ENCODE measurements at regions of chr17 and their contacts with region 1.

Region 1: DNA sequence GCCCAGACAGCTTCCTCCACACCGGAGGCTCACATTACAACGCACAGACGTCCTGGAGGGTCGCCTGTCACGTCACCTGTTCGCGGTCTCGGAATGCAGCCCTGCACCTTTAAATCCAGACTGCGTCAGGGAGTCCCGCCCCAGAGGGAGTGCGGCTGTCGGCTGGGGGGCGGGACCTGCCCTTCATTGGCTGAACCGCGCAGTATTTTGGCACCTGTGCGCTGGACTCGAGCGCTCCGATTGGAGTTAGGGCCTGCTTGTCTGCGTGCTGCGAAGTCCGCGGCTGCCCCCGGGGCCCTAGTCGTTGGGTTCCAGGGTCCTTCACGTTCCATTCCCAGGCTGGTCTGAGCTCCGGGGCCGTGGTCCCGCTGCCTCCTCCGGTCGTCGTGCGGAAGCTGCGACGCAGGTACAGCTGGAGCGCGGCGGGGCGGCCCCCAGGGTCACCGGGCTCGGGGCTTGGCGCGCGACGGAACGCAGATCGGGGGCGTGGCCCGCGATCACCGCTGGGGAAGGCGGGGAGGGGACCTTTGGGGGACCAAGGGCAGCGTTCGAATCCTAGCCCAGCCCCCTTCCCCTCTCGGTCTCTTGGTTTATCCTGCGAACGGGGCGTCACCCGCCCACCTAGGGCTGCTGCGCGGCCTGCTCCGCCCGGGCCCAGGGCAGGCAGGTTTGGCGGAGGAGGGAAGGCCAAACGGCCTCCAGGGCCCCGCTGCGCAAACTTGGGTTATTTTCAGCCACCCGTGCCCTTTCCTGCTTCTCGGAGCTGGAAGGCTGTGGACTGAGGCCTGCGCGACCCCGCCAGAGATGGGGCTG is at the start of gene MIEF2:
- DNase-seq: peak; percentile 96 to 100
- ATAC-seq: peak; percentile 72 to 88
- H3K4me3 ChIP-seq: peak within 1 kb of the TSS; percentile 76
- H3K27ac ChIP-seq: peak within 1 kb of the TSS; percentile 84 to 91
- H3K4me1 ChIP-seq: peaks cover 31% of the 10 kb centered on the region
- CTCF ChIP-seq: no peak
- EP300 ChIP-seq: no peak
- POLR2A ChIP-seq: peak; percentile 51
- RAD21 ChIP-seq: no peak
- polyA plus RNA-seq, gene MIEF2: 3.7 and 4.3 TPM in 2 replicates

Region 2: DNA sequence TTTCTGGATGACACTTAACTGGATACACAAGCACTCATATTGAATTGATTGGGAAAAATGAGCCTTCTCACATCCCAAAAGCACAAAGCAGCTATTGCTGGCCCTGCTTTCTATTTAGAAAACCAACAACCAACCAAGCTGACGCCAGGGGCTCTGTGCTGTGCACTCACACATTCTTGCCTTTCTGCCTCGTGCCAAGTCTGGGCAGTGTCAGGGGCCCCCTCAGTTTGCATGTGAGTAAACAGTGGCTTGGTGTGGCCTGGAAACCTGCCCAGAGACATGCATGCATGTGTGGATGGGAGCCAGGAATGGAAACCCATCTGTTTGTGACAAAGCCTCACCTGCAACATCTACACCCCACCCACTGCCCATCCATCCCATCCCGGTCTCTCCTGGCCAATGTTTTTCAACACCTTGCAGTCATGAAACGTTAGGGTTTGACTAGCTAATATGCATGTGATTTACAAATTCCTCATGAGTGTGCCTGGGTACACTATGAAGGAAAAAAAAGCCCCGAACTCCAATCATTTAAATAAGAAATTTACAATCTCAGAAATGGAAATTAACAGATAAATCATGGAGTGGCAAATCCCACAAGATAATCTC is 20.3 kb after region 1 on chr17:
- CTCF ChIA-PET with region 1: interaction called, 23 read pairs
- POLR2A ChIA-PET with region 1: no interaction called
- DNase-seq: no peak
- ATAC-seq: no peak
- H3K4me3 ChIP-seq: no peak overlapping the region
- H3K27ac ChIP-seq: no peak overlapping the region
- H3K4me1 ChIP-seq: peaks cover 3% of the 10 kb centered on the region; the same call in 1 of the 3 replicates
- CTCF ChIP-seq: no peak
- EP300 ChIP-seq: no peak
- POLR2A ChIP-seq: no peak
- RAD21 ChIP-seq: no peak